CD4-positive, alpha-beta T cell (primary cell): ENCODE measurements at regions of chr2 and their contacts with region 1.

Region 1: GRCh38 chr2:223957092-223957851 is at the start of gene MRPL44:
- DNase-seq: peak; percentile 92 to 99 (median 96)
- ATAC-seq: peak; percentile 100
- H3K4me3 ChIP-seq: peak within 1 kb of the TSS; percentile 89
- H3K4me3 Mint-ChIP-seq: peak within 1 kb of the TSS; percentile 94
- H3K27ac ChIP-seq: peak within 1 kb of the TSS; percentile 56 to 58
- H3K27ac Mint-ChIP-seq: peak within 1 kb of the TSS; percentile 93
- H3K4me1 ChIP-seq: peaks cover 31% of the 10 kb centered on the region
- H3K4me1 Mint-ChIP-seq: peaks cover 68% of the 10 kb centered on the region
- H3K27me3 ChIP-seq: no peaks in the 10 kb centered on the region
- H3K27me3 Mint-ChIP-seq: no peaks in the 10 kb centered on the region
- CTCF ChIP-seq: no peak
- total RNA-seq, gene MRPL44: 40.0 to 40.1 TPM

Region 2: GRCh38 chr2:222860740-222861410 is 1096.4 kb before region 1 on chr2 and contains the start of gene ACSL3:
- CTCF ChIA-PET with region 1: no interaction called
- POLR2A ChIA-PET with region 1: no interaction called
- intact Hi-C with region 1: loop called in 1 of 2 experiments (anchors 5 kb)
- DNase-seq: peak; percentile 82 to 94 (median 89)
- ATAC-seq: peak; percentile 98
- H3K4me3 ChIP-seq: peak within 1 kb of the TSS; percentile 76
- H3K4me3 Mint-ChIP-seq: peak within 1 kb of the TSS; percentile 88
- H3K27ac ChIP-seq: peak within 1 kb of the TSS in 1 of 2 donors; percentile 72
- H3K27ac Mint-ChIP-seq: peak within 1 kb of the TSS; percentile 74
- H3K4me1 ChIP-seq: peaks cover 17% of the 10 kb centered on the region
- H3K4me1 Mint-ChIP-seq: peaks cover 13% of the 10 kb centered on the region
- H3K27me3 ChIP-seq: no peaks in the 10 kb centered on the region
- H3K27me3 Mint-ChIP-seq: no peaks in the 10 kb centered on the region
- CTCF ChIP-seq: no peak
- total RNA-seq, gene ACSL3: 65.5 to 66.6 TPM

Region 3: GRCh38 chr2:223944703-223945531 is 12.4 kb before region 1 on chr2 and contains the start of gene WDFY1:
- CTCF ChIA-PET with region 1: interaction called, 5 read pairs
- POLR2A ChIA-PET with region 1: interaction called, 41 read pairs
- intact Hi-C with region 1: loop called in 1 of 2 experiments (anchors 2 kb)
- DNase-seq: peak; percentile 48 to 89 (median 75)
- ATAC-seq: peak; percentile 91
- H3K4me3 ChIP-seq: peak within 1 kb of the TSS; percentile 93
- H3K4me3 Mint-ChIP-seq: peak within 1 kb of the TSS; percentile 96
- H3K27ac ChIP-seq: peak within 1 kb of the TSS in 1 of 2 donors; percentile 46
- H3K27ac Mint-ChIP-seq: peak within 1 kb of the TSS; percentile 80
- H3K4me1 ChIP-seq: peaks cover 50% of the 10 kb centered on the region
- H3K4me1 Mint-ChIP-seq: peaks cover 53% of the 10 kb centered on the region
- H3K27me3 ChIP-seq: no peaks in the 10 kb centered on the region
- H3K27me3 Mint-ChIP-seq: no peaks in the 10 kb centered on the region
- CTCF ChIP-seq: no peak
- total RNA-seq, gene WDFY1: 41.1 to 41.5 TPM

Region 4: GRCh38 chr2:224585205-224586088 is 628.2 kb after region 1 on chr2 and contains the start of gene CUL3:
- CTCF ChIA-PET with region 1: no interaction called
- POLR2A ChIA-PET with region 1: interaction called, 3 read pairs
- intact Hi-C with region 1: loop called (anchors 5 to 10 kb)
- DNase-seq: peak; percentile 97 to 100 (median 100)
- ATAC-seq: peak; percentile 86
- H3K4me3 ChIP-seq: peak within 1 kb of the TSS; percentile 91
- H3K4me3 Mint-ChIP-seq: peak within 1 kb of the TSS; percentile 99
- H3K27ac ChIP-seq: peak within 1 kb of the TSS; percentile 73 to 79
- H3K27ac Mint-ChIP-seq: peak within 1 kb of the TSS; percentile 92
- H3K4me1 ChIP-seq: peaks cover 24% of the 10 kb centered on the region
- H3K4me1 Mint-ChIP-seq: peaks cover 45% of the 10 kb centered on the region
- H3K27me3 ChIP-seq: no peaks in the 10 kb centered on the region
- H3K27me3 Mint-ChIP-seq: no peaks in the 10 kb centered on the region
- CTCF ChIP-seq: no peak
- total RNA-seq, gene CUL3: 115 TPM

Region 5: DNA sequence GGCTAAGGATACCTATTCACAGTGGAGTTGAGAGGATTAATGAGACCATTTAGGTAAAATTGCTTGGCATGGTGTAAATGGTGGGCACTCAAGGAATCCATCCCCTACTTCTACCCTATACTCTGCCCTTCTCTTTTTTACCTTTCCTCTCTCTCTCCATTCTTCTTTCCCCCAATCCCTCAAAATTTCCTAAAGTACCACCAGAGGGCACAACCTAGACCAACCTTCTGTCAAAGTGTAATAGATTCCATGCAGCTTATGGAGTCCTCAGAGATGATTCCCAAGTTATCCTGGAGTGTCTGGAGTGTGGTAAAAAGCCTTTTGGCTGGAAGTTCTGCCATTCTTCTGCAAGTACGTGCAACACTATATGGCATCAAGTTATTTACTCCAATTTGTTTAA is 791.9 kb after region 1 on chr2:
- CTCF ChIA-PET with region 1: no interaction called
- POLR2A ChIA-PET with region 1: no interaction called
- intact Hi-C with region 1: no loop called
- DNase-seq: no peak
- ATAC-seq: no peak
- H3K4me3 ChIP-seq: no peak overlapping the region
- H3K4me3 Mint-ChIP-seq: no peak overlapping the region
- H3K27ac ChIP-seq: no peak overlapping the region
- H3K27ac Mint-ChIP-seq: no peak overlapping the region
- H3K4me1 ChIP-seq: no peaks in the 10 kb centered on the region
- H3K4me1 Mint-ChIP-seq: no peaks in the 10 kb centered on the region
- H3K27me3 ChIP-seq: peaks cover 0 to 4% of the 10 kb centered on the region in 2 experiments
- H3K27me3 Mint-ChIP-seq: peaks cover 15% of the 10 kb centered on the region
- CTCF ChIP-seq: no peak